AG04449 (cell line): ENCODE measurements at regions of chr3 and their contacts with region 1.

Region 1: GRCh38 chr3:176814285-176814684 is 383.0 kb downstream of the TBL1XR1 start:
- DNase-seq: no peak
- H3K4me3 ChIP-seq: no peak overlapping the region
- CTCF ChIP-seq: peak; percentile 63

Region 2: DNA sequence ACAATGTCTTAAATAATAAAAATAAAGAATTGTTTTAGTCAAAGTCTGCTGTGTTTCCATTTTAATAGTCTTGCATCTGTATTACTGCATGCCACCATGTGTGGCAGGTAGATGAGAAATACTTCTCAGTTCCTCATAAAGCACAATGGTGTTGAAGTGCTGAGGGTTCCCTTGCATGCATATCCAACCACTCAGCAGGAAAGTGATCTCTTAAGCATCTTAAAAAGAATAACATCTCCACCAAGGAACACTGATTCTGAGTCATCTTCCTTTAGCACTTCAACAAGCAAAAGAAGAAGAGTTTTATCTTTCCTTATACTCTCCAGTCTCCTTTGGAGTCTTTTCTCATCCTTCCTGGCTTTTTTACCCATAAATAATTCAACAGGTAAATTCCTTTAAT is 219.0 kb before region 1 on chr3:
- CTCF ChIA-PET with region 1: no interaction called
- POLR2A ChIA-PET with region 1: no interaction called
- DNase-seq: peak; percentile 28
- H3K4me3 ChIP-seq: no peak overlapping the region
- CTCF ChIP-seq: no peak

Region 3: DNA sequence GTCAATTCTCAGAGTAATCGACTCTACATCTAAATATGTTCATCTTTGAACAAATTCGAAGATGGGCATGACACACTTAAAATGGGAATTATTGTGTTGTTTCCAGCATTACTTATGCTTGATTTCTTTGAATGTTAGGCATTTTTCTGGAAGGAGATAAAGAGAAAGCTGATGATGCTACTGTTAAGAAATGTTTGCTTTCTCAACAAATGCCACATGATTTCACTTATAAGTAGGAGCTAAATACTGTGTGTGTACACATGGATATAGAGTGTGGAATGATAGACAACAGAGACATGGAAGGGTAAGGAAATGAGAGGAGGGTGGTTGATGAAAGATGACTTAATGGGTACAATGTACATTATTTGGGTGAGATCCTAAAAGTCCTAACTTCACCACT is 17.9 kb before region 1 on chr3:
- CTCF ChIA-PET with region 1: interaction called, 25 read pairs
- POLR2A ChIA-PET with region 1: no interaction called
- DNase-seq: no peak
- H3K4me3 ChIP-seq: no peak overlapping the region
- CTCF ChIP-seq: no peak

Region 4: DNA sequence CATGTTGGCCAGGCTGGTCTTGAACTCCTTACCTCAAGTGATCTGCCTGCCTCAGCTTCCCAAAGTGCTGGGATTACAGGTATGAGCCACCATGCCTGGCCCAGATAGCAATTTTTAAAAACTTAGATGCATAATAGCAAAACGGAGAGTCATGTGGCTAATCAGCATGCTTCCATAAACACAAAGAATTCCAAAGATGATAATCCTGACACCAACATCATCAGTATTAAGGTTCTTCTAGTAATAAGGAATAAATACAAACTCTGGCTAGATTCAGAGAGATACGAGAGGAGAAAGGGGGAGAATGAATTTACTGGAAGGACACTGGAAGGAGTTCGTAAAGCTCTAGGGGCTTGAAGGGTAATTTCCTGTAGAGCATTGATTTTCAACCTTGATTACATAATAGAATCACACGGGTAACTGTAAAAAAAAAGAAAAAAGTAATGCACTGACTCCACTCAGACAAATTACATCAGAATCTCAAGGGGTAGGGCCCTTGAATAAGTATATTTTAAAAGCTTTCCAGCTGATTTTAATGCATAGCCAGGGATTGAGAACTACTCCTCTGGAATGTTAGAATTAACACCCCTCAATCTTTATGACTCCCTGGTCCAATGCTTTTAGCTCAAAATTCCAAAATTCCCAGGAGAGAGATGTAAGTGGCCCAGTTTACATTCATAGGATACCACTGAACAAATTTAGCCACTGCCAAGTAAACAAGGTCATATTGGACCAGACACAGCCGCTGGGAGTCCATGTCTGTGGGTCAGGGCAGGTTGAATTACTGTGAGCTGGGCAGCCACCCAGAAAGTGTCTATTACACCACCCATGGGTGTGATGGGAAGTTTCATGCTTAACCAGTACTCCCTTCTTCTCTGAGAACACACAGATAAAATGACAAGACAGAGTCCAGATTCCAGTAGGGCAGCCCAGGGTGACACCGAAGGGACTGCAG is 139.1 kb after region 1 on chr3:
- CTCF ChIA-PET with region 1: no interaction called
- POLR2A ChIA-PET with region 1: no interaction called
- DNase-seq: peak; percentile 95
- H3K4me3 ChIP-seq: no peak overlapping the region
- CTCF ChIP-seq: no peak

Region 5: GRCh38 chr3:177089110-177089509 is 274.8 kb after region 1 on chr3:
- CTCF ChIA-PET with region 1: no interaction called
- POLR2A ChIA-PET with region 1: no interaction called
- DNase-seq: no peak
- H3K4me3 ChIP-seq: no peak overlapping the region
- CTCF ChIP-seq: no peak

Region 6: DNA sequence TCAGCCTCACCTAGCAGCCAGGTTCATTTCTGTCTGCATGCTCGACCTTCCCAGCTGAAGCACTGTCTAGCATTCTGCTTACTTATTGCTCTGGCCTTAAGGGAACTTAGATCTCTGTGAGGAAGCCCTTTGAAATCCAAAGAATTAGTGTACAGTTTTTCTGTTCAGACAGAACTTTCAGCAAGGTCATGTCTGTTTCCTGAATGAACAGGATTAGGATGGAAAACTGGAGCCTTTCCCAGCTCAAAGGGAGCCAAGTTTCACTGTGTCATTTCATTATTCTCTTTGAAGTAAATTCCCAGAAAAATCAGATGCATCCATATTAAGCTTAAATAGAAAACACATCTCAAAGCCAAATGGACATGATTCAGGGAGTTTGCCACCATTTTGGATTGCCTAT is 1264.7 kb after region 1 on chr3:
- CTCF ChIA-PET with region 1: no interaction called
- POLR2A ChIA-PET with region 1: no interaction called
- DNase-seq: peak; percentile 42
- H3K4me3 ChIP-seq: no peak overlapping the region
- CTCF ChIP-seq: no peak